CD8-positive, alpha-beta T cell (primary cell): ENCODE measurements at regions of chr4 and their contacts with region 1.

Region 1: GRCh38 chr4:142126890-142127497 is 490.6 kb downstream of the IL15 start:
- DNase-seq: peak; percentile 8 to 77 (median 59)
- ATAC-seq: peak; percentile 66
- H3K4me3 ChIP-seq: no peak overlapping the region
- H3K4me3 Mint-ChIP-seq: no peak overlapping the region
- H3K27ac ChIP-seq: no peak overlapping the region
- H3K27ac Mint-ChIP-seq: no peak overlapping the region
- H3K4me1 ChIP-seq: peaks cover 9% of the 10 kb centered on the region
- H3K4me1 Mint-ChIP-seq: peaks cover 30% of the 10 kb centered on the region
- H3K27me3 ChIP-seq: no peaks in the 10 kb centered on the region
- H3K27me3 Mint-ChIP-seq: no peaks in the 10 kb centered on the region
- CTCF ChIP-seq: peak; percentile 97

Region 2: DNA sequence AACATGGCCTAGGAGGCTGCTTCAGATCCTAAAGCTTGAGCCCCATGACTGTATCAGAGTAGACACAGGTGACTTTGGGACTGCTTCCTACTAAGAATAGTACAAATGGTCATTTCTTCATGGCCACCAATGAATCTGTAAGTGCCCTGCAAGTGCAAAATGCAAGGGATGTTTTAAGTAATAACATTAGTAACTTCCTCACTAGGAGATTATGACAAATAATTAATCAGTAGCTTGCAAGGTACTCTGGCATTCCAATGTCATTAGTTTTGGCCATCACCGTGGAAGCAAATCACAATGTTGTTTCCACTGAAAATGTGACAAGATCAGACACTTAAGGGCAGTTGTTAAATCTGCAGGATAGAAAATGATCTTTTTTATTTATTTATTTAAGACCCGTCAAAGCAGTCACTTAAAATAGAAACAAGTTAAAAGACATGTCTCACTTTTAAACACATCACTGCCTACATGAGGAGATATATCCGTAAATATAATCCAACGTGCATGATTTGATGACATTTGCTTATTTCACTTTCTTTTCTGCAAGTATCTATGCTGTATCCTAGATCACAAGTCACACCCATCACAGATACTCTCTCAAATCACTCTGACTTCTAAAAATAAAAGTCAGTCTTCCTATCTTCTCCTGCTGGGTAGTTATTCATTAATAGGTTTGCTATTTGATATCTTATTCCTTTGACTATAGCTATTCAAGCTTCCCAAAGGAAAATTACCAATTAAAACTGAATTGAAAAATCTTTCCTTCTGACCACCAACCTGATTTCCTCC is 90.0 kb before region 1 on chr4:
- CTCF ChIA-PET with region 1: no interaction called
- POLR2A ChIA-PET with region 1: no interaction called
- intact Hi-C with region 1: no loop called
- DNase-seq: no peak
- ATAC-seq: no peak
- H3K4me3 ChIP-seq: no peak overlapping the region
- H3K4me3 Mint-ChIP-seq: no peak overlapping the region
- H3K27ac ChIP-seq: no peak overlapping the region
- H3K27ac Mint-ChIP-seq: no peak overlapping the region
- H3K4me1 ChIP-seq: no peaks in the 10 kb centered on the region
- H3K4me1 Mint-ChIP-seq: peaks cover 10% of the 10 kb centered on the region
- H3K27me3 ChIP-seq: no peaks in the 10 kb centered on the region
- H3K27me3 Mint-ChIP-seq: no peaks in the 10 kb centered on the region
- CTCF ChIP-seq: no peak

Region 3: GRCh38 chr4:142104041-142104684 is 22.8 kb before region 1 on chr4:
- CTCF ChIA-PET with region 1: no interaction called
- POLR2A ChIA-PET with region 1: no interaction called
- intact Hi-C with region 1: no loop called
- DNase-seq: no peak
- ATAC-seq: no peak
- H3K4me3 ChIP-seq: no peak overlapping the region
- H3K4me3 Mint-ChIP-seq: no peak overlapping the region
- H3K27ac ChIP-seq: no peak overlapping the region
- H3K27ac Mint-ChIP-seq: no peak overlapping the region
- H3K4me1 ChIP-seq: no peaks in the 10 kb centered on the region
- H3K4me1 Mint-ChIP-seq: no peaks in the 10 kb centered on the region
- H3K27me3 ChIP-seq: no peaks in the 10 kb centered on the region
- H3K27me3 Mint-ChIP-seq: no peaks in the 10 kb centered on the region
- CTCF ChIP-seq: no peak

Region 4: DNA sequence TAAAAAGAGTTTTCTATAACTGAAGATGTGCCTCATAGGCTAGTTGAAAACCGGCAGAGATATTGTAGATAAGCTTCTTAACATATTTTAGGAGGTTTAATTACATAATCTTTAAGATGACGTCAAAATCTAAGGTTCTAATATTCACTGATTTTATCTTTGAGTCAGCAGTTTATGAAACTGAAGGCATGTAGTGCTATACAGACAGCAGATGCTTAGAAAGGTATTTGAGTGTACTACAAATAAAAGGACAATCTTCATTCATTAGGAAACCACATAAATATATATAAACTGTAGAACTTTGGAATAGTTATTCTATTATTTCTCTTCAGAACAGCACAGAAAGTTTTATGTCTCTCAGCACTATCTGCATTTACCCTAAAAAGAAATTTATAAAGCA is 14.2 kb after region 1 on chr4:
- CTCF ChIA-PET with region 1: no interaction called
- POLR2A ChIA-PET with region 1: no interaction called
- intact Hi-C with region 1: no loop called
- DNase-seq: no peak
- ATAC-seq: no peak
- H3K4me3 ChIP-seq: no peak overlapping the region
- H3K4me3 Mint-ChIP-seq: no peak overlapping the region
- H3K27ac ChIP-seq: no peak overlapping the region
- H3K27ac Mint-ChIP-seq: no peak overlapping the region
- H3K4me1 ChIP-seq: no peaks in the 10 kb centered on the region
- H3K4me1 Mint-ChIP-seq: peaks cover 8% of the 10 kb centered on the region
- H3K27me3 ChIP-seq: no peaks in the 10 kb centered on the region
- H3K27me3 Mint-ChIP-seq: no peaks in the 10 kb centered on the region
- CTCF ChIP-seq: no peak

Region 5: GRCh38 chr4:142434519-142435239 is 307.7 kb after region 1 on chr4:
- CTCF ChIA-PET with region 1: no interaction called
- POLR2A ChIA-PET with region 1: no interaction called
- intact Hi-C with region 1: loop called (anchors 5 kb)
- DNase-seq: peak in 2 of 9 experiments; percentile 48 to 56
- ATAC-seq: peak; percentile 55
- H3K4me3 ChIP-seq: no peak overlapping the region
- H3K4me3 Mint-ChIP-seq: no peak overlapping the region
- H3K27ac ChIP-seq: no peak overlapping the region
- H3K27ac Mint-ChIP-seq: no peak overlapping the region
- H3K4me1 ChIP-seq: no peaks in the 10 kb centered on the region
- H3K4me1 Mint-ChIP-seq: peaks cover 16% of the 10 kb centered on the region
- H3K27me3 ChIP-seq: no peaks in the 10 kb centered on the region
- H3K27me3 Mint-ChIP-seq: no peaks in the 10 kb centered on the region
- CTCF ChIP-seq: no peak

Region 6: DNA sequence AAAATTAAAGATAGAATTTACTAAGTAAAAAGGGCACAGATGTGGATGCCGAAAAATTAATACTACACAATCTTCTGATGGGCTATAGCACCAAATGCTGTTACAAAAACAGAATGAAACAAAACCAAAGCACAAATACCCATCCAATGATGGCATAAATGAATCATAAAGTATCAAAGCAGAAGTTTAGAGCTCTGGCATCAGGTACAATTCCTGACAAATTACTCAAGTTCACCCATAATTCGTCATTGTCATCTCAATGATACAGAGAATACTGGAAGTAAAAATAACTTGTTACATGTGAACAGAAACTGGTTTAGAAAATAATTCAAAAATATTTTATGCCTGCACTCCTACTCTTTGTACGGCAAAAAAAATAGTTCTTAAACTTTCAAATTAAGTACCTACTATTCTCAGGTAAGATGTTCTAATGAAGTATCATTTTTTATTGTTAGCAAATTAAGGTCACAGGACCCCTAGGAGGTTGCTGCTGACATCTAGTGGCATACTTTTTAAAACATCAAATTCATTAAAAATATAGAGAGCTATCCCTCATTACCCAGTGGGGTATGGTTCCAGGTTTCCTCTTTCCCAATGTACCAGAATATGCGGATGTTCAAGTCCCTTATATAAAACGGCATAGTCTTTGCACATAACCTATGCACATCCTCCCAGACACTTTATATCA is 593.0 kb after region 1 on chr4:
- CTCF ChIA-PET with region 1: interaction called, 5 read pairs
- POLR2A ChIA-PET with region 1: no interaction called
- intact Hi-C with region 1: loop called (anchors 1 kb)
- DNase-seq: peak in 2 of 9 experiments; percentile 48 to 56
- ATAC-seq: peak; percentile 49
- H3K4me3 ChIP-seq: no peak overlapping the region
- H3K4me3 Mint-ChIP-seq: no peak overlapping the region
- H3K27ac ChIP-seq: no peak overlapping the region
- H3K27ac Mint-ChIP-seq: no peak overlapping the region
- H3K4me1 ChIP-seq: peaks cover 3% of the 10 kb centered on the region
- H3K4me1 Mint-ChIP-seq: peaks cover 13% of the 10 kb centered on the region
- H3K27me3 ChIP-seq: no peaks in the 10 kb centered on the region
- H3K27me3 Mint-ChIP-seq: no peaks in the 10 kb centered on the region
- CTCF ChIP-seq: peak; percentile 69

Region 7: DNA sequence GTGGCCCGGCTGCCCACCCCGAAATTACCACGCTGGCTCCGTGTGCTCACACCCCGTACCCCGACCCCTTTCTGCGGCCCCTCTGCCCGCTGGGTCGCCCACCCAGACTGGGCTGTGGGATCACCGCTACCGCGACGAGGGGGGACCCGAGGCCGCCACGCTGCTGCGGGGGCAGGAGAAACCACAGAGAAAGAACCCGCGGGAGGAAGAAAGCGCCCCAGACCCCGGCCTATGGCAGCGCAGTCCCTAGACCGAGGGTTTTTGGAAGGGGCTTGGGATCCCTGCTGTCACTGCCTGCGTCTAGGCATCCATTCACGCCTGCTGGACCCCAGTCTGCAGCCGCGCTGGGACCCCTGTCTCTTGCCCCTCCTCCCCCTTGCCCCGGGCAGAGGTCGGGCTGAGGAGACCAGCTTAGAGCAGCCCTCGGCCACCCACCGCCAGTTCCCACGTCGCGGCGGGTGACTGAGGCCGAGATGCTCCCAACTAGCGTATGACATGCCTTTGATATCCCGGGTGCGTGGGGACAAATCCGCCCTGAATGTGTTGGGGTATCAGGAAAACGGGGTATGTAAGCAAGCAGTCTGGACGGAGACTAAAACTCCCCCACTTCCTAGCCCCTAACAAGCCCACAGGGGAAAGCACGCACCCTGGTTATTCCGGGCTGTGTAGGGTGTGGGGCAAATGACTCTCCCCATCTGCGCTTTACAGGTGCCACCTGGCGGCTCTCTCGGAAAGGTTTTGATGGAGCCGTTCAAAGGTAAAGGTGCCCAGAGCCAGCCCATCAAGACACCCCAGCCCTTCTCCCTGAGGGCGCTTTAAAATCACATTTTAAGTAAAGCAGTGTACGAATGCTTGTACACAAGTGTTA is 720.0 kb after region 1 on chr4:
- CTCF ChIA-PET with region 1: interaction called, 28 read pairs
- POLR2A ChIA-PET with region 1: no interaction called
- intact Hi-C with region 1: loop called (anchors 1 kb)
- DNase-seq: peak; percentile 33 to 78 (median 70)
- ATAC-seq: peak; percentile 83
- H3K4me3 ChIP-seq: peak overlapping the region; percentile 54 to 87
- H3K4me3 Mint-ChIP-seq: peak overlapping the region; percentile 86
- H3K27ac ChIP-seq: no peak overlapping the region
- H3K27ac Mint-ChIP-seq: no peak overlapping the region
- H3K4me1 ChIP-seq: peaks cover 4% of the 10 kb centered on the region
- H3K4me1 Mint-ChIP-seq: peaks cover 13% of the 10 kb centered on the region
- H3K27me3 ChIP-seq: peaks cover 4 to 12% of the 10 kb centered on the region in 2 experiments
- H3K27me3 Mint-ChIP-seq: peaks cover 36% of the 10 kb centered on the region
- CTCF ChIP-seq: peak; percentile 42

Region 8: DNA sequence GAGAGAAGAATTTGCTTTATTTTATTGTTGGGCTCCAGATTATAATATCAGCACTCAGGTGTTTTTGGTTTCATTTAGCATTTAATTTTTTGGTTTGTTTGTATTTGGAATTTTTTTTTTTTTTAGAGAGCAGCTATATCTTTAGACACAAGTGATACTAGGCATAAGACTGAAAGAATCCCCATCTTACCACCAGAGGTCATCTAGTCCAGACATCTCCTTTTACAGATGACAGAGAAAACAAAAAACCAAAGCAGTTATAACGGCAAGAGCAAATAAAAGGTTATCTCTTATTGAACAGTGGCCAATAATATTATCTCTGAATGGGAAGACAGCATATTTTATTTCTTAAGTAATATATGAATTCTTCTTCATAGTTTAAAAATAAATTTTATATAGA is 1080.6 kb after region 1 on chr4:
- CTCF ChIA-PET with region 1: no interaction called
- POLR2A ChIA-PET with region 1: no interaction called
- intact Hi-C with region 1: loop called in 1 of 2 experiments (anchors 10 kb)
- DNase-seq: no peak
- ATAC-seq: no peak
- H3K4me3 ChIP-seq: no peak overlapping the region
- H3K4me3 Mint-ChIP-seq: no peak overlapping the region
- H3K27ac ChIP-seq: no peak overlapping the region
- H3K27ac Mint-ChIP-seq: peak overlapping the region; percentile 39
- H3K4me1 ChIP-seq: no peaks in the 10 kb centered on the region
- H3K4me1 Mint-ChIP-seq: peaks cover 14% of the 10 kb centered on the region
- H3K27me3 ChIP-seq: no peaks in the 10 kb centered on the region
- H3K27me3 Mint-ChIP-seq: no peaks in the 10 kb centered on the region
- CTCF ChIP-seq: no peak